Heart left ventricle (tissue), 16 donors: ENCODE measurements at regions of chr22 and their contacts with region 1.

Region 1: DNA sequence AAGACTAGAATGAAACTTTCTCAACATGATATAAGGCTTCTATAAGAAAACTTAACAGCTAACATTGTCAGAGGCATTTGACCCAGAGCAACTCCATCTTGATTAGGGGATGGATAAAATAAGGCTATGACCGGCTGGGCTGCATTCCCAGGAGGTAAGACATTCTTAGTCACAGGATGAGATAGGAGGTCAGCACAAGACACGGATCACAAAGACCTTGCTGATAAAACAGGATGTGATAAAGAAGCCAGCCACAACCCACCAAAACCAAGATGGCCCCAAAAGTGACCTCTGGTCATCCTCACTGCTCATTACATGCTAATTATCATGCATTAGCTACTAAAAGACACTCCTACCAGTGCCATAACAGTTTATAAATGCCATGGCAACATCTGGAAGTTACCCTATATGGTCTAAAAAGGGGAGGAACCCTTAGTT is 135.2 kb downstream of the TTC28 start:
- DNase-seq: no peak
- ATAC-seq: no peak
- H3K4me3 ChIP-seq: no peak overlapping the region
- H3K27ac ChIP-seq: no peak overlapping the region
- H3K4me1 ChIP-seq: no peaks in the 10 kb centered on the region
- H3K27me3 ChIP-seq: no peaks in the 10 kb centered on the region
- CTCF ChIP-seq: no peak
- POLR2A ChIP-seq: no peak

Region 2: DNA sequence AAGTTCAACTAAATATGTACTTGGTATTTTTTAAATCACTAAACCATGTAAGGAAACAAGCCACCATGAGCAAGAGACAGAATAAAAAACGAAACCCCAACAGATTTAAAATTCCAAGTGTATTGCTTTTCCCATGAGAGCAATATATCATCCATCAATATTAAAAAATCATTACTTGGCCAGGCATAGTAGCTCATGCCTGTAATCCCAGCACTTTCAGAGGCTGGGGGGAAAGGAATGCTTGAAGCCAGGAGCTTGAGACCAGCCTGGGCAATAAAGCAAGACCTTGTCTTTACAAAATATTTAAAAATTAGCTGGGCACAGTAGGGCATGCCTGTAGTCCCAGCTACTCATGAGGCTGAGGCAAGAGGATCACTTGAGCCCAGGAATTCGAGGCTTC is 55.6 kb before region 1 on chr22:
- intact Hi-C with region 1: no loop called
- DNase-seq: no peak
- ATAC-seq: no peak
- H3K4me3 ChIP-seq: no peak overlapping the region
- H3K27ac ChIP-seq: no peak overlapping the region
- H3K4me1 ChIP-seq: no peaks in the 10 kb centered on the region
- H3K27me3 ChIP-seq: no peaks in the 10 kb centered on the region
- CTCF ChIP-seq: no peak
- POLR2A ChIP-seq: no peak

Region 3: DNA sequence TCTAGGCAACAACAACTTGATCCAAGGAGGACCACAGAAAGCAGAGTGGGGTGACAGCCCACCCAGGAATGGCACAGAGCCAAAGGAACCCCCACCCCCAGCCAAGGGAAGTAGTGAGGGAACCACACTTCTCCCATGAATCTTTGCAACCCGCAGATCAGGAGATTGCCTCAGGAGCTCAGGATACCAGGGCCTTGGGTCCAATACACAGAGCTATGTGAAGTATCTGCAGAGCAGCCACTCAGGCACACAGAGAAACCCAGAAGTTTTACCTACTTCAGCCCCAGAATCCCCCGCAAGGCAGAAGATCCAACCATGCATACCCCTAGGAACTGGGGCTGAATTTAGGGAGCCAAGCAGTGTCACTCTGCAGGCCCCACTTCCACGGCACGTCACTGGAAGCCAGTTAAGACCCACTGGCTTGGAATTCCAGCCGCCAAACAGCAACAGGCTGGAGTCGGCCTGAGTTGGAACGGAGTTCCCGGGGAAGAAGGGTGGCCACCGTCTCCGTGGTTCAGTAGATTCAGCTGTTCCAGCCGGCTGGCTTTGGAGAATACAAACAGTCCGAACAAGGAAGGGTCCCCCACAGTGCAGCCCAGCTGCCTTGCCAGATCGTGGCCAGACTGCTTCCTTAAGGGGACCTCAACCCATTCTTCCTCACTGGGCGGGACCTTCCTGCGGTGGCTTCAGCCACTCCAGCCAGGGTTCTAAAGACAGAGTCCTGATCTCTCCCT is 38.9 kb before region 1 on chr22:
- intact Hi-C with region 1: loop called in 1 of 10 experiments (anchors 5 kb)
- DNase-seq: peak in 1 of 5 donors; percentile 58
- ATAC-seq: peak in 3 of 4 donors; percentile 18 to 34 (median 33)
- H3K4me3 ChIP-seq: peak overlapping the region in 3 of 12 donors; percentile 10 to 46 (median 27)
- H3K27ac ChIP-seq: peak overlapping the region in 1 of 12 donors; percentile 17
- H3K4me1 ChIP-seq: peaks cover 0 to 8% (median 0%) of the 10 kb centered on the region in 12 donors
- H3K27me3 ChIP-seq: no peaks in the 10 kb centered on the region
- CTCF ChIP-seq: no peak
- POLR2A ChIP-seq: no peak

Region 4: DNA sequence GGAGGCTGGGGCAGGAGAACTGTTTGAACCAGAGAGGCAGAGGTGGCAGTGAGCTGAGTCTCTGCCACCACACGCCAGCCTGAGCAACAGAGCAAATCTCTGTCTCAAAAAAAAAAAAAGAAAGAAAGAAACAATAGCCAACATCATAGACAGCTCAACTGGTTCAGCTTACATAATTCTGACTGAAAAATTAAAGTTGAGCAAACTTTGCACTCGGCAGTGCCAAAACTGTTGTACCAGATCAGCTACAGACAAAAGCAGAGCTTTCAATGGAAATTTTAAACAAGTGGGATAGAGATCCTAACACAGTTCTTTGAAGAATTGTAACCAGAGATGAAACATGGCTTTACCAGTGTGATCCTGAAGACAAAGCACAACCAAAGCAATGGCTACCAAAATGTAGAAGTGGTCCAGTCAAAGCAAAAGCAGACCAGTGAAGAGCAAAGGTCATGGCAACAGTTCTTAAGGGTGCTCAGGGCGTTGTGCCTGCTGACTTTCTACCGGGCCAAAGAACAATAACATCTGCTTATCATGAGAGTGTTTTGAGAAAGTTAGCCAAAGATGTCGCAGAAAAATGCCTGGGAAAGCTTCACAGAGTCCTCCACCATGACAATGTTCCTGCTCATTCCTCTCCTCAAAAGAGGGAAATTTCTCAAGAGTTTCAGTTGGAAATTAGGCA is 75.9 kb after region 1 on chr22:
- intact Hi-C with region 1: no loop called
- DNase-seq: no peak
- ATAC-seq: no peak
- H3K4me3 ChIP-seq: no peak overlapping the region
- H3K27ac ChIP-seq: no peak overlapping the region
- H3K4me1 ChIP-seq: peaks cover 0 to 4% (median 0%) of the 10 kb centered on the region in 12 donors
- H3K27me3 ChIP-seq: no peaks in the 10 kb centered on the region
- CTCF ChIP-seq: no peak
- POLR2A ChIP-seq: no peak